ENCODE measurements at regions of chr17 and their contacts with region 1.

Region 1: DNA sequence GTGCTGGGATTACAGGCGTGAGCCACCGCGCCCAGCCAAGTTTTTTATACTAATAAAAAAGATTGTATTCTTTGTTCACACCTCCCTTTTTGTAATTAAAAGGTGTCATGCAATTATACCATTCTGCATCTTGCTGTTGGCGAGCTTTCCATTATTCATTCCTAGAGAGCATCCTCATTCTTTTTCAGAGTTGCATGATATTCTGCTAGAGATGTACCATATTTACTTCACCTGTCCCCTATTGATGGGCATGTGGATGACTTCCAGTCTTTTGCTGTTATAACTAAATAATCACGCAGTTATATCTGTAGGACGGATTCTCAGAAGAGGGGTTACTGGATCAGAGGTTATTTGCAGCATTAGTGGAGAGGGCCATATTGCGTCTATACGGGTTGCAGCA is 17.0 kb downstream of the SGSM2 start:
- DNase-seq: no peak
- CTCF ChIP-seq: no peak

Region 2: GRCh38 chr17:2336215-2336851 is 18.0 kb before region 1 on chr17 and contains the start of gene TSR1:
- CTCF ChIA-PET with region 1: interaction called, 56 read pairs
- POLR2A ChIA-PET with region 1: no interaction called
- DNase-seq: peak; percentile 98
- CTCF ChIP-seq: peak; percentile 45

Region 3: GRCh38 chr17:2369551-2370210 is 15.4 kb after region 1 on chr17:
- CTCF ChIA-PET with region 1: interaction called, 22 read pairs
- POLR2A ChIA-PET with region 1: no interaction called
- DNase-seq: no peak
- CTCF ChIP-seq: no peak